ENCODE measurements at regions of chr9 and their contacts with region 1.

Region 1: GRCh38 chr9:36873247-36873875 is 160.7 kb downstream of the PAX5 start:
- DNase-seq: peak; percentile 78

Region 2: DNA sequence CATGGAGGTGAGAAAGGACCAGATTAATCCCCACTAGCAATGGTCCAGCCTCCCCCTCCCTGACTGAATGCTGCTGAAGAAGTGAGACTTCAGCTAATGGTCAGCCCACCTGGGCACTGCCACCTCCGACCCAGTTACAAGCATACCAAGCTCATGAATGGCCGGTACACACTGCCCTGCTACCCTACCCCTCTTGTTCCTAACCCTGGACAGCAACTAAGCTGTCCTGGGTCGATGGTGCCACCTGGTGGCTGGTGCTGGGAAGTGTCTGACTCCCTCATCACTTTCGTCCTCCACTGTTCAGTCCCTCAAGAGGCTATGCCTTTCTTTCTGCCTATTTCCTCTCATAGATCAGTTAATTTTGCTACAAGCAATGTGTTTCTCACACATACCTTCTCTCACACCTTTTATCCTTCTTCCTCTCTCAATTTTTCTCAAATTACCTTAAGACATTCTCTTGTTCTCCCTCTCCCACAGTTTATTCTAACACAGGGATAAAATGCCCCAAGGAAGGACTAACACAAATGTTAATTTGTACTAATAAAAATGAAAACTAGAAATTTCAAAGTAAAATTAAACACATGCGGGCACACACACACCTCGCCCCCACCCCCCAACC is 118.3 kb after region 1 on chr9:
- CTCF ChIA-PET with region 1: interaction called, 65 read pairs
- POLR2A ChIA-PET with region 1: no interaction called
- DNase-seq: peak; percentile 79